HepG2 (cell line): ENCODE measurements at regions of chr11 and their contacts with region 1.

Region 1: DNA sequence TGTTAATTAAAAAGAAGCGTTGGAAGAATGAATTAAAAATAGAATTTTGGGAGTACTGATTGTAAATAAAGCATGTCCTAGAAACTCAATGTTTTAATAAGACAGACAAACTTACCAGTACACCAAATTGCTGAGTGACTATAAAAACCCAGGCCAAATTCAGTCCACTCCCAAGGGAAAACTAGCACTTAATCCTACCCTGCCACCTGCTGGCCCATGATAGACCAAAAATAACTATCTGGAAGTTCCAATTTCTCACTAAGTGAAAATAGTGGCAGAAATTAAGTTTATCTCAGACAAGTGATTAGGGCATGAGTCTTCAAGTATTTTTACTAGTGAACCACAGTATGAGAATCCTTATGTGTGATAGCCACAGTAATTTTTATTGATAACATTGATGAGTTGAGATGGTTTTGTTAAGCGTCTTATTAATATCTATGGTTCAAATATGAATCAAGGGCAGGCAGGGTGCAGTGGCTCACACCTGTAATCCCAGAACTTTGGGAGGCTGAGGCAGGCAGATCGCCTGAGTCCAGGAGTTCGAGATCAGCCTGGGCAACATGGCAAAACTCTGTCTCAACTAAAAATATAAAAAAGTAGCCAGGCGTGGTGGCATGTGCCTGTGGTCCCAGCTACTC is 9.8 kb upstream of the DDX10 start:
- DNase-seq: peak; percentile 43
- ATAC-seq: peak; percentile 78
- H3K4me3 ChIP-seq: no peak overlapping the region
- H3K27ac ChIP-seq: no peak overlapping the region
- H3K4me1 ChIP-seq: no peaks in the 10 kb centered on the region
- H3K27me3 ChIP-seq: no peaks in the 10 kb centered on the region
- CTCF ChIP-seq: peak; percentile 73
- EP300 ChIP-seq: no peak
- POLR2A ChIP-seq: no peak
- RAD21 ChIP-seq: no peak; the same call in 1 of the 2 replicates

Region 2: DNA sequence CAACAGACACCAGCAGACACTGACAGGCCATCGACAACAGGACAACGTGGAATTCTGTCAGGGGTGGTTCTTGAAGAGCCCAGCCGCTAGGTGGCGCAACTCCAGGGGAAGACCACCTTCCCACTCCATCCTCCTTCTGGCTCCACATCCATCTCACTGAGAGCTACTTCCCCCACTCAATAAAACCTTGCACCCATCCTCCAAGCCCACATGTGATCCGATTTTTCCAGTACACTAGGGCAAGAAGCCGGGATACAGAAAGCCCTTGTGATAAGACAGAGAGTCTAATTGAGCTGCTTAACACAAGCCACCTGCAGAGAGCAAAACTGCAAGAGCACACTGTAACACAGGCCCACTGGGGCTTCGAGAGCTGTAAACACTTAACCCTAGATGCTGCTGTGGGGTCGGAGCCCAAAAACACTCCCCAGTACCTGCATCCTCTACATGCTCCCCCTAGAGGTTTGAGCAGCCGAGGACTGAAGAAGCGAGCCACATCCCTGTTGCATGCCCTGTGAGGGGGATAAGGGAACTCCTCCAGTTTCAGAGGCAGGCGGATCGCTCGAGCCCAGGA is 738.4 kb before region 1 on chr11:
- CTCF ChIA-PET with region 1: interaction called, 3 read pairs
- POLR2A ChIA-PET with region 1: no interaction called
- in situ Hi-C with region 1: no loop called
- intact Hi-C with region 1: loop called (anchors 10 kb)
- DNase-seq: peak; percentile 19
- ATAC-seq: peak; percentile 95
- H3K4me3 ChIP-seq: no peak overlapping the region
- H3K27ac ChIP-seq: no peak overlapping the region
- H3K4me1 ChIP-seq: no peaks in the 10 kb centered on the region
- H3K27me3 ChIP-seq: peaks cover 0 to 16% of the 10 kb centered on the region in 2 experiments; a peak in 2 of 5 replicates
- CTCF ChIP-seq: peak; percentile 74
- EP300 ChIP-seq: no peak
- POLR2A ChIP-seq: no peak
- RAD21 ChIP-seq: no peak

Region 3: GRCh38 chr11:108008656-108009496 is 646.2 kb before region 1 on chr11 and contains the start of gene CUL5:
- CTCF ChIA-PET with region 1: no interaction called
- POLR2A ChIA-PET with region 1: no interaction called
- in situ Hi-C with region 1: loop called (anchors 10 kb)
- intact Hi-C with region 1: loop called (anchors 1 kb)
- DNase-seq: peak; percentile 85
- ATAC-seq: peak; percentile 96
- H3K4me3 ChIP-seq: peak within 1 kb of the TSS; percentile 87 to 99 (median 97)
- H3K27ac ChIP-seq: peak within 1 kb of the TSS; percentile 99
- H3K4me1 ChIP-seq: peaks cover 37% of the 10 kb centered on the region
- H3K27me3 ChIP-seq: no peaks in the 10 kb centered on the region
- CTCF ChIP-seq: peak; percentile 95
- EP300 ChIP-seq: peak in 1 of 2 experiments; percentile 75; a peak in 2 of 4 replicates
- POLR2A ChIP-seq: peak; percentile 85 to 98
- RAD21 ChIP-seq: peak; percentile 80
- total RNA-seq, gene CUL5: 24.7 and 35.5 TPM in 2 replicates

Region 4: DNA sequence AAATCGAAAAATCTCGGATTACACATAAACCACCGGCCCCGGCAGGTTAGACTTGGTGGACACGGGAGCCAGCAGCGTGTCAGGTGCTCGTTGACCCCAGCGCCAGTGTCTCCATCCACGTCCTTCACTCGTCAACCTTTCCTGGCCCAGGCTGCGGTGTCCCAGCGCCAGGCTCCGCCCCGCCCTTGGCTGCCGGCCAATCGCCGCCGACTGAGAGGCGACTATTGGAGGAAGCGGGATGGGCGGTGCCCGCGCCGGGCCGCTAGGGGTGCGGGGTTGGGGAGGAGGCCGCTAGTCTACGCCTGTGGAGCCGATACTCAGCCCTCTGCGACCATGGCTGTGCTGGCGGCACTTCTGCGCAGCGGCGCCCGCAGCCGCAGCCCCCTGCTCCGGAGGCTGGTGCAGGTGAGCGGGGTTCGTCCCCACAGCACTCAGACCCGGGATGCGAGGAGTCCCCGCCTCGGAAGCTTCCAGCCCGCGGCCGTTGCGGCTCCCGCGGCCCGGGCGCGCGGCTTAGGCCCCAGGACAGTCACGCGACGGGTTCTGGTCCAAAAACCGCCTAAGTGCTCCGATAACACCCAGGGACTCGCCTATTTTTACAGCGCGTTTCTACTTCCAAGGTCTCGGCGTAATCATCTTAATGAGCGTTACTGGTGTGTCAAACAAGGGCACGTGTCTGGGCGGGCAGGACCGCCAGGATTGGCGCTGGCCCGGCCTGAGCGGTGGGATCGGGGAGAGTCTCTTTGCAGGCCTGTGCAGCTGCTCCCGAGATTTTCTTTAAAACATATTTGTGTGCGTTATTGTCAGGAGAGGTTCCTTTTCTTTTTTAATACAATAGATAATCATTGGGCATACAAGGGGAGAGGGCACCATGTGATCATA is 533.6 kb before region 1 on chr11 and contains the start of gene ACAT1:
- CTCF ChIA-PET with region 1: interaction called, 5 read pairs
- POLR2A ChIA-PET with region 1: no interaction called
- in situ Hi-C with region 1: loop called (anchors 10 kb)
- intact Hi-C with region 1: no loop called
- DNase-seq: peak; percentile 91
- ATAC-seq: peak; percentile 97
- H3K4me3 ChIP-seq: peak within 1 kb of the TSS; percentile 77 to 85 (median 82)
- H3K27ac ChIP-seq: peak within 1 kb of the TSS; percentile 82
- H3K4me1 ChIP-seq: peaks cover 37% of the 10 kb centered on the region
- H3K27me3 ChIP-seq: no peaks in the 10 kb centered on the region; a peak in 1 of 5 replicates
- CTCF ChIP-seq: peak; percentile 45; the same call in 1 of the 2 replicates
- EP300 ChIP-seq: no peak
- POLR2A ChIP-seq: peak; percentile 89 to 95
- RAD21 ChIP-seq: peak; percentile 45; the same call in 1 of the 2 replicates
- total RNA-seq, gene ACAT1: 165 and 181 TPM in 2 replicates

Region 5: GRCh38 chr11:108414958-108415357 is 240.2 kb before region 1 on chr11:
- CTCF ChIA-PET with region 1: interaction called, 16 read pairs
- POLR2A ChIA-PET with region 1: no interaction called
- in situ Hi-C with region 1: no loop called
- intact Hi-C with region 1: no loop called
- DNase-seq: no peak
- ATAC-seq: no peak
- H3K4me3 ChIP-seq: no peak overlapping the region
- H3K27ac ChIP-seq: no peak overlapping the region
- H3K4me1 ChIP-seq: no peaks in the 10 kb centered on the region
- H3K27me3 ChIP-seq: no peaks in the 10 kb centered on the region
- CTCF ChIP-seq: no peak
- EP300 ChIP-seq: no peak
- POLR2A ChIP-seq: no peak
- RAD21 ChIP-seq: no peak

Region 6: GRCh38 chr11:108620958-108621772 is 33.9 kb before region 1 on chr11:
- CTCF ChIA-PET with region 1: no interaction called
- POLR2A ChIA-PET with region 1: no interaction called
- in situ Hi-C with region 1: no loop called
- intact Hi-C with region 1: no loop called
- DNase-seq: no peak
- ATAC-seq: no peak
- H3K4me3 ChIP-seq: no peak overlapping the region
- H3K27ac ChIP-seq: no peak overlapping the region
- H3K4me1 ChIP-seq: no peaks in the 10 kb centered on the region
- H3K27me3 ChIP-seq: no peaks in the 10 kb centered on the region
- CTCF ChIP-seq: no peak
- EP300 ChIP-seq: no peak
- POLR2A ChIP-seq: no peak
- RAD21 ChIP-seq: no peak